HepG2 (cell line): ENCODE measurements at regions of chr17 and their contacts with region 1.

Region 1: GRCh38 chr17:7834962-7835813 is 1.2 kb downstream of the KDM6B start:
- DNase-seq: peak; percentile 96
- ATAC-seq: peak; percentile 65
- H3K4me3 ChIP-seq: peak overlapping the region; percentile 84 to 93 (median 92)
- H3K27ac ChIP-seq: peak overlapping the region; percentile 92
- H3K4me1 ChIP-seq: peaks cover 58% of the 10 kb centered on the region
- H3K27me3 ChIP-seq: peaks cover 3 to 18% of the 10 kb centered on the region in 2 experiments; a peak in 4 of 5 replicates
- CTCF ChIP-seq: peak; percentile 92
- EP300 ChIP-seq: 0 out of 4 replicates have a peak, but pooled peaks have one; percentile 3 to 25
- POLR2A ChIP-seq: peak; percentile 46 to 57; a peak in 2 of 4 replicates
- RAD21 ChIP-seq: peak; percentile 74

Region 2: GRCh38 chr17:7745748-7746470 is 89.3 kb before region 1 on chr17:
- CTCF ChIA-PET with region 1: no interaction called
- POLR2A ChIA-PET with region 1: no interaction called
- in situ Hi-C with region 1: no loop called
- intact Hi-C with region 1: loop called (anchors 5 kb)
- DNase-seq: peak; percentile 61
- ATAC-seq: peak; percentile 54
- H3K4me3 ChIP-seq: no peak overlapping the region
- H3K27ac ChIP-seq: no peak overlapping the region
- H3K4me1 ChIP-seq: peaks cover 37% of the 10 kb centered on the region
- H3K27me3 ChIP-seq: peaks cover 0 to 16% of the 10 kb centered on the region in 2 experiments; a peak in 3 of 5 replicates
- CTCF ChIP-seq: no peak
- EP300 ChIP-seq: no peak
- POLR2A ChIP-seq: no peak
- RAD21 ChIP-seq: no peak

Region 3: DNA sequence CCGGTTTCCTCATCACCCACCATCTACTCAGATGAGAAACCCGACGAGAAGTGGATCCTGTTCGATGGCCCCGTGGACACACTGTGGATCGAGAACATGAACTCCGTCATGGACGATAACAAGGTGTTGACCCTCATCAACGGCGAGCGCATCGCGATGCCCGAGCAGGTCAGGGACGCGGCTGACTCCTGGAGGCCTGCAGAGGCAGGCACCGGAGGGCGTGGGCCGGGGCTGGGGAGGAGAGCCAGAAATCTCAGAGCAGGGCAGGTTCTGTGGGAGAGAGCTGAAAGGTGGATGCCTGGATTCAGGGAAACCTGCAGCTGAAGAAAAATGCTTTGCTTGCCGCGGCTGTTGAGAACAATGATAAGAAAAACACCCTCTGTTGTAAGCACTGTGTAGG is 48.3 kb before region 1 on chr17:
- CTCF ChIA-PET with region 1: no interaction called
- POLR2A ChIA-PET with region 1: no interaction called
- in situ Hi-C with region 1: no loop called
- intact Hi-C with region 1: no loop called
- DNase-seq: no peak
- ATAC-seq: no peak
- H3K4me3 ChIP-seq: no peak overlapping the region
- H3K27ac ChIP-seq: no peak overlapping the region
- H3K4me1 ChIP-seq: no peaks in the 10 kb centered on the region
- H3K27me3 ChIP-seq: peaks cover 1 to 38% of the 10 kb centered on the region in 2 experiments
- CTCF ChIP-seq: no peak
- EP300 ChIP-seq: no peak
- POLR2A ChIP-seq: no peak
- RAD21 ChIP-seq: no peak

Region 4: DNA sequence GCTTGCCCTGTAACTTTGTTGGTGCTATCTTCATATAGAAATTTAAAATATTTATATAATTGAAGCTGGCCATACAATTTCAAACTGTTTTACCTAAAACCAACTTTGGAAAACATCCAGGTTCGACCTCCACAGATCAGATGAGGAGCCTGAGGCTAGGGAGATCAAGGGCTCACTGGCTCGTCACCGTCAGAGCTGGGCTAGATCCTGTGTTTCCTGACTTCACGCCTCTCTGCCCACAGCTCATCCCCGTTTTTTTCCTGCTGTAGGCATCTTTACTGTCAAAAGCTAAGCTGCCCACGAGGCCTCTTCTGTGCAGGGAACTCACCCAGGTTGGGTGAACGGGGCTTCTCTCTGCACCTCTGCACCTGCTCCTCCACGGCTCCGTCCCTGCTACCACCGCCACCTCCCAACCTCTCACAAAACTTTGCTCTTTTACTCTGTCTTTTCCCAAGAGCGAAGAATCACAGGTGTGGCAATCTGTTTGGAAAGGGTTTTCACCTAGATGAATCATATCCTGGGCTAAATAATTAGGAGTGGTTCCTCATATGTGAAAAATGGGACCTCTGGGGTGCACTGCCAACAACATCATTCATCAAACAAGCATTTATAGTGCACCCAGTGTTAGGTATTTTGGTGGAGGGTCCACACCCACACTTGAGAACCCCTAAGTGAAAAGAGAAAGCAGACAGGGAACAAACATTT is 25.9 kb before region 1 on chr17:
- CTCF ChIA-PET with region 1: no interaction called
- POLR2A ChIA-PET with region 1: no interaction called
- in situ Hi-C with region 1: no loop called
- intact Hi-C with region 1: no loop called
- DNase-seq: no peak
- ATAC-seq: no peak
- H3K4me3 ChIP-seq: no peak overlapping the region
- H3K27ac ChIP-seq: no peak overlapping the region
- H3K4me1 ChIP-seq: no peaks in the 10 kb centered on the region
- H3K27me3 ChIP-seq: peaks cover 0 to 28% of the 10 kb centered on the region in 2 experiments; a peak in 3 of 5 replicates
- CTCF ChIP-seq: no peak
- EP300 ChIP-seq: no peak
- POLR2A ChIP-seq: no peak
- RAD21 ChIP-seq: no peak

Region 5: GRCh38 chr17:7867881-7868329 is 32.7 kb after region 1 on chr17:
- CTCF ChIA-PET with region 1: no interaction called
- POLR2A ChIA-PET with region 1: no interaction called
- in situ Hi-C with region 1: no loop called
- intact Hi-C with region 1: no loop called
- DNase-seq: no peak
- ATAC-seq: peak; percentile 52; the same call in 2 of the 3 replicates
- H3K4me3 ChIP-seq: no peak overlapping the region
- H3K27ac ChIP-seq: no peak overlapping the region
- H3K4me1 ChIP-seq: peaks cover 34% of the 10 kb centered on the region
- H3K27me3 ChIP-seq: no peaks in the 10 kb centered on the region
- CTCF ChIP-seq: no peak
- EP300 ChIP-seq: no peak
- POLR2A ChIP-seq: no peak
- RAD21 ChIP-seq: no peak